Mammary epithelial cell (primary cell): ENCODE measurements at regions of chr5 and their contacts with region 1.

Region 1: DNA sequence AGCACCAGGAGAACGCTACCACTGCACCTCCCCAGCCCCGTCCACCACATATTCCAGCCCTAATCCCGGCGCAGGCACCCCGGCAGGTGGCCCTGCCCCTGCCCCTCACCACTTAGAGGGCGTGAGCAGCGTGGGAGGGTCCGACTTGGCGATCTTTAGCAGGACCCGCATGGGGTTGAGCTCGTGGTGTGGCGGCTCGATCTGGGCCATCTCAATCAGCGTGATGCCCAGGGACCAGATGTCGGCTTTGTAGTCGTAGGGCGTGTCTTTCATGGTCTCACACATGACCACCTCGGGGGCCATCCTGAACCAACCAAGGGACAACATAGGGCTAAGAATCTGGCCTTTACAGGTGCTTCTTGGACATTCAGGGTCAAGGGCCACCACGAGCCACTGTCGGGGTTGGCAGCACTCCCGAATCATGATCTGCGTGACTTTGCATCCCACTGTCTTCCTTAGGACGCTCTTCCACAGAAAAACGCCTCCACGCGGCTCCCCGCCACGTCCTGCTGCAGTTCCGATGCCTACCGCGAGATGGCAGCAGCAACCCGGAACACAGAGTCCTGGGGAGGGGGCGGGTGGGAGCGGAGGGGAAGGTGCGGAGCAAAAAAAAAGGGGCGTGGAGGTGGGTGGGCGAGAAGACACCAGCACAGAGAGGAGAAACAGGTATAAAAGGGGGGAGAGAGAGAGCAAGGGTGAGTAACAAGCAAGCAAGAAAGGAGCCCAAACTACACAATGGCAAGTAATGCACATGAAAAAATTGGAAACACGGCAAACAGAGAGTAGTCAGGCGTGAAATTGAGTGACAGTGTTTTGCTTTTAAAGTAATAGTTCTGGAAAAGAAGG is 81.3 kb downstream of the STK10 start:
- DNase-seq: no peak
- H3K4me3 ChIP-seq: no peak overlapping the region
- H3K27ac ChIP-seq: peak overlapping the region; percentile 29
- H3K4me1 ChIP-seq: peaks cover 75% of the 10 kb centered on the region
- H3K27me3 ChIP-seq: no peaks in the 10 kb centered on the region
- CTCF ChIP-seq: peak; percentile 63 to 96

Region 2: DNA sequence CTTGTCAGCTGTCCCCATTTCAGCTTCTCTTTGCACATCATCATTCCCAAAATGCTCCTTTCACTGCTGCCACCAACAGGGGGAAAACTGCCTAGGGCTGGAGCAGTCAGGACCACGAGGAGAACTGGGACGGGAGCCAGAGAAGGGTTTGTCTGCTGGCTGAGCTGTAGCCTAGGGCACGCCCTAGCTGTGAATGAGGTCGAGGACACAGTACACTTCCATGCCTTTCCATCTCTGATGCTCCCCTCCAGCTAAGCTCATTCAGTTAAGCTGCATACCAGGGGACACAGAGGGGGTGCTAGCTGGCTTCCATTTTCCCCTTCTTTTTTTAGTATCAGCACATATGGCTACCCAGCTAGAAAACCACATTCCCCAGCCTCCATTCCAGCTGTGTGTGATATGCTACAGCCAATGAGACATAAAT is 16.5 kb after region 1 on chr5:
- CTCF ChIA-PET with region 1: interaction called, 11 read pairs
- dilution Hi-C with region 1: no loop called
- in situ Hi-C with region 1: no loop called
- intact Hi-C with region 1: no loop called
- DNase-seq: no peak
- H3K4me3 ChIP-seq: no peak overlapping the region
- H3K27ac ChIP-seq: no peak overlapping the region
- H3K4me1 ChIP-seq: no peaks in the 10 kb centered on the region
- H3K27me3 ChIP-seq: no peaks in the 10 kb centered on the region
- CTCF ChIP-seq: no peak

Region 3: GRCh38 chr5:172179361-172179989 is 72.7 kb after region 1 on chr5:
- CTCF ChIA-PET with region 1: no interaction called
- dilution Hi-C with region 1: loop called (anchors 5 kb)
- in situ Hi-C with region 1: loop called in 1 of 2 experiments (anchors 5 kb)
- intact Hi-C with region 1: no loop called
- DNase-seq: no peak
- H3K4me3 ChIP-seq: no peak overlapping the region
- H3K27ac ChIP-seq: no peak overlapping the region
- H3K4me1 ChIP-seq: peaks cover 17% of the 10 kb centered on the region
- H3K27me3 ChIP-seq: no peaks in the 10 kb centered on the region
- CTCF ChIP-seq: no peak

Region 4: GRCh38 chr5:172283020-172283861 is 176.5 kb after region 1 on chr5 and contains the start of gene UBTD2:
- CTCF ChIA-PET with region 1: interaction called, 3 read pairs
- dilution Hi-C with region 1: no loop called
- in situ Hi-C with region 1: loop called (anchors 5 to 25 kb)
- intact Hi-C with region 1: loop called (anchors 2 kb)
- DNase-seq: peak; percentile 77
- H3K4me3 ChIP-seq: peak within 1 kb of the TSS; percentile 89 to 97 (median 90)
- H3K27ac ChIP-seq: peak within 1 kb of the TSS; percentile 72
- H3K4me1 ChIP-seq: peaks cover 10% of the 10 kb centered on the region
- H3K27me3 ChIP-seq: no peaks in the 10 kb centered on the region
- CTCF ChIP-seq: peak; percentile 11 to 57
- total RNA-seq, gene UBTD2: 15.5 to 17.8 TPM

Region 5: DNA sequence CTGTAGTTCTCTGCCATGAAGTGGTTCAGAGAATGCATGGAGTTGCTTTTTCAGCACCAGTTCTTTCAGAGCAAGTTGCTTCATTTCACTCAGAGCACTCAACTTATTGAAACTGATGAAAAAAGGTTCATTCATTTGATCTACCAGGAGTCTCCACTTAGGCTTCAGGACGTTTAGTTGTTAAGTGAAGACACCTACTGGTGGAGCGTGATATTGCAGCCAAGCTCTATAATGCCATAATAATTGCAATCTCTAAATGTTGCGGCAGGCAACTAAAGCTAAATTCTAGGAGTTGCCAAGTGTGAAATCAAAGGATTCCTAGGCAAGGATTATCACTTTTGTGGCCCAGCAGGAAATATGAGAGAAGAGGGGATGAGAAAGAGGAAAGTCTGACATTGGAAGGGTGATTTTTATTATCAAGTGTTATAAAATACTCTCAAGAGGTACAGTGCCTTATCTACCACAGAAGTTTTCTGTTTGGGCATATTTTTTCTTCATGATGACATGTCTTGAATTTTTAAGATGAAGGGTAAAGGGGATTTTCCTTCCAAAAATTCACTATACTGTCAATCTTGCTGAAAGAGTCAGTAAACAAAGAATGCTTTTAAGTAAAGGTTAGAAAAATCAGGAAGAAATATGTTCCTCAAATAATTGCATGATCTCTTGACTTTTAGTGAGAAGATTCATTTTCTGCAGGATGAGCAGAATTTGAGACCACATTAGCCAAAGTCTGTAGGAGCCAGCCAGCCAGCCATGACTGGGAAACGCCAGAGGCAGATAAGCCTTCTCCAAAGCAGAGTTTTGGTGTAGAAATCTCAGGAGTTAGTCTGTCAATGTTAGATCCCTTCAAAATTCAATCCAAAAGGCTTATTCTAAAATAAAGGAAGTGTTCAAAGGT is 264.2 kb after region 1 on chr5:
- CTCF ChIA-PET with region 1: no interaction called
- dilution Hi-C with region 1: no loop called
- in situ Hi-C with region 1: no loop called
- intact Hi-C with region 1: loop called (anchors 10 kb)
- DNase-seq: peak; percentile 45
- H3K4me3 ChIP-seq: no peak overlapping the region
- H3K27ac ChIP-seq: no peak overlapping the region
- H3K4me1 ChIP-seq: peaks cover 4% of the 10 kb centered on the region
- H3K27me3 ChIP-seq: no peaks in the 10 kb centered on the region
- CTCF ChIP-seq: peak; percentile 66 to 91